Mammary epithelial cell (primary cell): ENCODE measurements at regions of chr6 and their contacts with region 1.

Region 1: DNA sequence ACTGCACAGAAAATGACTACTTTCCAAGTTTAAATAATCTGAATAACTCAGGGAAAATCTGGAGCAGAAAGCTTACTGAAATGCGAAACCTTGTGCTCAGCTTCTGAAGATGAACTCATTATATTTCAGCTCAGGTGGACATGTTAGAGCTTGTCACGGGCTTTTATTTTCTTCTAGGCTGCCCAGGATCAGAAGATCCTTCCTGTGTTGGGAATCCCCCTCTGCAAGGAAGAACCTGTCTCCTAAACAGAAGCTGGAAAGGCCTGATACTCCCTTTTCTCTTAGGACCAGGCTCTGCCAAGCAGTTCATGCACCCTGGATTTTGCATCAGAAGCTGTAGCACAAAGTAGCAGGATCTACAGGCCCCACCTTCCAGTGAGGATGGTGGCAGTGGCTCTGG is 5.1 kb upstream of the SLC2A12 start:
- DNase-seq: peak; percentile 94
- H3K4me3 ChIP-seq: no peak overlapping the region
- H3K27ac ChIP-seq: peak overlapping the region; percentile 70
- H3K4me1 ChIP-seq: peaks cover 44% of the 10 kb centered on the region
- H3K27me3 ChIP-seq: no peaks in the 10 kb centered on the region
- CTCF ChIP-seq: no peak

Region 2: GRCh38 chr6:134035823-134036296 is 21.6 kb before region 1 on chr6:
- CTCF ChIA-PET with region 1: no interaction called
- dilution Hi-C with region 1: no loop called
- in situ Hi-C with region 1: no loop called
- intact Hi-C with region 1: loop called (anchors 1 kb)
- DNase-seq: peak; percentile 98
- H3K4me3 ChIP-seq: no peak overlapping the region
- H3K27ac ChIP-seq: peak overlapping the region; percentile 99
- H3K4me1 ChIP-seq: peaks cover 37% of the 10 kb centered on the region
- H3K27me3 ChIP-seq: no peaks in the 10 kb centered on the region
- CTCF ChIP-seq: no peak